AG04450 (cell line): ENCODE measurements at regions of chr17 and their contacts with region 1.

Region 1: GRCh38 chr17:57597531-57598453 is 147.3 kb downstream of the CCDC182 start:
- DNase-seq: no peak
- H3K4me3 ChIP-seq: no peak overlapping the region
- H3K27ac ChIP-seq: peak overlapping the region; percentile 39
- H3K27me3 ChIP-seq: no peaks in the 10 kb centered on the region
- CTCF ChIP-seq: peak; percentile 96

Region 2: GRCh38 chr17:56908001-56908542 is 689.7 kb before region 1 on chr17:
- CTCF ChIA-PET with region 1: no interaction called
- POLR2A ChIA-PET with region 1: no interaction called
- DNase-seq: no peak
- H3K4me3 ChIP-seq: no peak overlapping the region
- H3K27ac ChIP-seq: no peak overlapping the region
- H3K27me3 ChIP-seq: no peaks in the 10 kb centered on the region
- CTCF ChIP-seq: no peak

Region 3: DNA sequence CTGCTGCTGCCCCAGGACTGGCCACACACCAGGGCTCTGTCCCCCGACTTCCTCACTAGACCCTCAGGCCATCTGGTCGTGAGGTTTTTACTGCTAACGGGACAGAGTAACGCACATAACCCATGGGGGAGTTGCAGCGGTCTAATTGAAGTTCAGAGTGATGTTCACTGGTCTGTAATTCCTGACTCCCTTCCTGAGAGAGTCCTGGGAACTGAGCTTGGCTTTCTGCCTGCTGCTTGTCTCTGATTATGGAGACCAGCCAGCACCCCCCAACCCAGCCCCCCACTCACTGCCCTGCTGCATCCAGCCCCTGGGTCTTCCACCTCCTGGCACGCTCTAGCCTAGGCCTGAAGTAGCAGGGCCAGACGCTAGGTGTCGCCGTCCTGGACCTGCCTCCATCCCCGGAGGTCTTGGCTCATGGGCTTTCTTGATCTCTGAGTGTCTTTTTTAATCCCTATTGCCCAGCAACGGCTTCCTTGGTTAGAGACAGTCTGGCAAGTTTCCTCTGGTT is 45.6 kb before region 1 on chr17:
- CTCF ChIA-PET with region 1: interaction called, 13 read pairs
- POLR2A ChIA-PET with region 1: no interaction called
- DNase-seq: no peak
- H3K4me3 ChIP-seq: no peak overlapping the region
- H3K27ac ChIP-seq: no peak overlapping the region
- H3K27me3 ChIP-seq: no peaks in the 10 kb centered on the region
- CTCF ChIP-seq: peak; percentile 63

Region 4: GRCh38 chr17:57584050-57584551 is 13.7 kb before region 1 on chr17:
- CTCF ChIA-PET with region 1: interaction called, 49 read pairs
- POLR2A ChIA-PET with region 1: no interaction called
- DNase-seq: no peak
- H3K4me3 ChIP-seq: no peak overlapping the region
- H3K27ac ChIP-seq: no peak overlapping the region
- H3K27me3 ChIP-seq: no peaks in the 10 kb centered on the region
- CTCF ChIP-seq: no peak

Region 5: GRCh38 chr17:57622683-57623433 is 25.1 kb after region 1 on chr17:
- CTCF ChIA-PET with region 1: interaction called, 27 read pairs
- POLR2A ChIA-PET with region 1: no interaction called
- DNase-seq: no peak
- H3K4me3 ChIP-seq: no peak overlapping the region
- H3K27ac ChIP-seq: peak overlapping the region; percentile 52
- H3K27me3 ChIP-seq: no peaks in the 10 kb centered on the region
- CTCF ChIP-seq: no peak

Region 6: DNA sequence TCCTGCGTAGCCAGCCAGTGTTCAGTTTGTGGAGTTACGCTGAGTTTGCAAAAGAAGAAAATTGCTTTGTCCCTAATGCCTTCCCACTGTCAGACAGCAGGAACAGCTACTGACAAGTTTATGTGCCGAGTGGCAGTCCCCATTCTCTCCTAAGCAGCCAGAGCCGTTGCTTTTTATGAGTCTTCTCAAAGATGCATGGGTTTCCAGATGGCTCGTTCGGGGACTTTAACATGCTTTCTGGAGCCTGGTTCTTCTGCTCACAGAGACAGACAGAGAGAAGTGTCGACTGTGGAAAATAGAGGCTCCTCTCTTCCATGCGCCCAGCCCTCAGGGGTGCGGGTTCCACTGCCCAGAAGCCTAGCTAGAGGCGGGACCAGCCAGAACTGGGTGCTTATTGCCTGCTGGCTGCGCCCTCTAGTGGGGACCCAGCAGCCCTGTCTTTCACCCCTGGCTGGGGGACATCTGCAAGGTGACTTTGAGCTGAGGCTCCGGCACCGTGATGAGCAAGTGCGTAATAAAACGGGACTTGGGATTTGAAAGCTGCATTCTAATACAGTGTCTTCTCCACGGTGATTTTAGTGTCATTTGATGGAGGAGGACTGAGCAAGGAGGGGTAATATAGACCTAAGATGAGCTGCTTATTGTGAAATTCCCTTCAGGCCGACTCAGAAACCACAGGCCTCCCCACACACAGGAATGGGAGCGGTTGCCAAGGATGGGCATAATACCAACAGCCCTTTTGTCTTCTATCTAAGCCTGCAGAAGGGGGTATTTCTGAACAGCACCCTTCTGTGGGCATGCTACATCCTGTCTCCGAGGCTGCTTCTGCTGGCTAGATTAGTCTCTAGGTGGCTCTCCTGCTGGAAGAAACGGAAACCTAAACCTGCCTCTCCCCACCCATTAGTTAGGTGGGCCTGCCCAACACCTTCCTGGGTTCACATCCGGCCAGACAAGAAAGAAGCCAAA is 74.2 kb after region 1 on chr17:
- CTCF ChIA-PET with region 1: interaction called, 116 read pairs
- POLR2A ChIA-PET with region 1: no interaction called
- DNase-seq: peak; percentile 34
- H3K4me3 ChIP-seq: no peak overlapping the region
- H3K27ac ChIP-seq: no peak overlapping the region
- H3K27me3 ChIP-seq: no peaks in the 10 kb centered on the region
- CTCF ChIP-seq: peak; percentile 98

Region 7: GRCh38 chr17:57955183-57955931 is 357.6 kb after region 1 on chr17 and contains the start of gene CUEDC1:
- CTCF ChIA-PET with region 1: no interaction called
- POLR2A ChIA-PET with region 1: no interaction called
- DNase-seq: no peak
- H3K4me3 ChIP-seq: peak within 1 kb of the TSS; percentile 74
- H3K27ac ChIP-seq: peak within 1 kb of the TSS; percentile 39
- H3K27me3 ChIP-seq: no peaks in the 10 kb centered on the region
- CTCF ChIP-seq: peak; percentile 29
- polyA plus RNA-seq, gene CUEDC1: 21.6 and 27.6 TPM in 2 replicates